ENCODE measurements at regions of chr11 and their contacts with region 1.

Region 1: GRCh38 chr11:115446214-115446613 is 58.0 kb downstream of the CADM1 start:
- DNase-seq: no peak
- H3K4me3 ChIP-seq: no peak overlapping the region
- H3K4me3 Mint-ChIP-seq: no peak overlapping the region
- H3K27ac Mint-ChIP-seq: no peak overlapping the region
- H3K4me1 ChIP-seq: no peaks in the 10 kb centered on the region
- H3K4me1 Mint-ChIP-seq: peaks cover 17% of the 10 kb centered on the region
- H3K27me3 ChIP-seq: no peaks in the 10 kb centered on the region
- H3K27me3 Mint-ChIP-seq: no peaks in the 10 kb centered on the region
- CTCF ChIP-seq: no peak

Region 2: GRCh38 chr11:115488945-115489344 is 42.7 kb after region 1 on chr11:
- CTCF ChIA-PET with region 1: interaction called, 3 read pairs
- POLR2A ChIA-PET with region 1: no interaction called
- intact Hi-C with region 1: loop called (anchors 2 kb)
- DNase-seq: peak; percentile 59 to 87
- H3K4me3 ChIP-seq: no peak overlapping the region
- H3K4me3 Mint-ChIP-seq: peak overlapping the region; percentile 67
- H3K27ac Mint-ChIP-seq: peak overlapping the region; percentile 92
- H3K4me1 ChIP-seq: peaks cover 66% of the 10 kb centered on the region
- H3K4me1 Mint-ChIP-seq: peaks cover 64% of the 10 kb centered on the region
- H3K27me3 ChIP-seq: no peaks in the 10 kb centered on the region
- H3K27me3 Mint-ChIP-seq: no peaks in the 10 kb centered on the region
- CTCF ChIP-seq: no peak

Region 3: DNA sequence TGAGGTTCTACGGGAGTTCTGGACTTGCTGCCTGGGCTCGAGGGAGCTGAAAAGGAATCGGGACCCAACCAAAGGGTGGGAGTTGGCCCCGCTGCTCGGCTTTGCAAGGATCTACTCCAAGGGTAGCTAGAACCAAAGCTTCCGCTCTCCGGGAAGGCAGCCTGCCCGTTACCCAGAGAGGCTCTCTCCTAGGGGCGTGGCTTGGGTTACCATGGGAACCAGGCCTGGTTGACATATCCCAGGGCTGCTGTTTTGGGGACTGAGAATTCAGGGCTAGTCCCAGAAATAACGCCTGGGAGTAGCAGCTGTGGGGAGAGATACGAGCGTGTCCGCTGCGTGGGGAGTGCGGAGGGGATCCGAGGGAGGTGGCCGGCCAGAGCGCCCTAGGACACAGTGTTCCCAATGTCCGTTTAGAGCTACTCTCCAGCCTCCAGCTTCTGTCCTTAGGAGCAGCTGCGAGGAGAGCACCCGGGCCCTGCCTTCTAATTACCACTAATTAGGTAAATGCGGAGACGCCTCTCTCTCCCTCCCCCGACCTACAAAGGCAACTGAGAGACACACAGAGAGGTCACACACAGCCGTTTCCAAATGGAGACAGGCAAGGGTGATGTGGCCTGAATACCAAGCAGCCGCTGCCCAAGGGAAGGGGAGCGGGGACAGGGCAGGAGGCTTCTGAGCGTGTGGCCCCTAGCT is 199.6 kb after region 1 on chr11:
- CTCF ChIA-PET with region 1: no interaction called
- POLR2A ChIA-PET with region 1: no interaction called
- intact Hi-C with region 1: no loop called
- DNase-seq: peak in 1 of 2 experiments; percentile 47
- H3K4me3 ChIP-seq: no peak overlapping the region
- H3K4me3 Mint-ChIP-seq: no peak overlapping the region
- H3K27ac Mint-ChIP-seq: no peak overlapping the region
- H3K4me1 ChIP-seq: no peaks in the 10 kb centered on the region
- H3K4me1 Mint-ChIP-seq: no peaks in the 10 kb centered on the region
- H3K27me3 ChIP-seq: peaks cover 2% of the 10 kb centered on the region; the same call in 1 of the 2 replicates
- H3K27me3 Mint-ChIP-seq: peaks cover 28% of the 10 kb centered on the region
- CTCF ChIP-seq: no peak